HepG2 (cell line): ENCODE measurements at regions of chr1 and their contacts with region 1.

Region 1: DNA sequence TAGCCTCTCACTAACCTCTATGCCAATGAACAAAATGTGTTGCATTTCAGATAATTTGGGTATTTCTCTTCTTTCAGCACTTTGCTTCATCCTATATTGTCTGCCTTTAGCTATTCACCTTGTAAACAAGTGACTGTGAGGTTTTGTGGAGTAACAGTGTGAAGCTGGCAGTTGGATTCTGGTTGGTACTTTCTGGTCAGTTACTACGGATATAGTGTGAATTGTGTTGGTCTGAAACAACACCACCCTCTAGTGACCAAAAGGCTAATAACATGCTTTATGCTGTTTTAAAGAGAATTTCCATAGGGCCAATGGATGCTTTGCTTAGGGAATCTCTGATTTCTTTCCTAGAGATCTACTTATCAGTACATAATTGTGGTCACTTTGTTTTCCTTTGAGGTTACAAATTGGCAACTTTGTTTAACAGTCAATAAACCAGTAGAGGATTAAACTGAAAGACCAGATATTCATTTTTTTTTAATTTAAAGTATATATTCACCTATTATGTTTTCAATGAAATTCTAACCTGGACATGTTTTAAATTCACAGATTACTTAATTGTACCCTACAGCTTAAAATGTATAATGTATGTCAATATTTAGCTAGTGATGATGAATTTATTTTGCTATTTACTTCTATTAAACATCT is 2.5 kb upstream of the PTGER3 start:
- DNase-seq: peak; percentile 64
- ATAC-seq: peak; percentile 37
- H3K4me3 ChIP-seq: no peak overlapping the region
- H3K27ac ChIP-seq: no peak overlapping the region
- H3K4me1 ChIP-seq: peaks cover 6% of the 10 kb centered on the region; the same call in 1 of the 2 replicates
- H3K27me3 ChIP-seq: peaks cover 11 to 25% of the 10 kb centered on the region in 2 experiments
- CTCF ChIP-seq: peak; percentile 80
- EP300 ChIP-seq: no peak
- POLR2A ChIP-seq: no peak
- RAD21 ChIP-seq: peak; percentile 46; the same call in 1 of the 2 replicates

Region 2: DNA sequence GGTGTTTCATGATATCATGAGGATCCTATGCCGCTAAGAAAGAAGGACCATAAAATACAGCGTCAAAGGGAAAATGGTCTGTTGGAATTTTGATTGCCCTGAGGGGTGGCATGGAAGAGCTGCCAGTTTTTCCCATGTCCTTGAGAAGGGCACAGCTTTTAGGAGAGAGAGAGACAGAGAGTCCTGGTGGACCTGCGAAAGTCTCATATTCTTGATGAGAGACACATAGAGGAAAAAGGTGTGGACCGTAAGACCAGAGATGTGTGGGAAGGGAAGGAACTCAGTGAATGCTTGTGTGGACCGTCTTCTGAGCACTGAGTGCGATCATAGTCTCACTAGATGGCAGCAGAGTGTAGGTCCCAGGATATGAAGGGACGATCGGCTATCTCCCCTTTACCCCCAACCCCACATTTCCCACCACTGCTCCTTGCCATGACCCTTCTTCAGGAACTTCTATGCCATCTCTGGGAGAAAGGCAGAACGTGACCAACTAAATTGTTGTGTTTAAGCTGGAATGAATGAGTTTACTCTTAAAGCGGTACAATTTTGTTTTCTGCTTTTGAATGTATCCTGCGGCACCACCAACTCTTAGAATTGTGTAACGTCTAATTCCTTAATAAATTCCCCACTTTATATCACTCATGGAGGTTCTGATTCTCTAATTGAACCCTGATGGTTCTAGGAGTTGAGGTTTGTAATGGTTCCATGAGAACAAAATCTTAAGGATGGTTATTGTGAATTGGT is 521.3 kb before region 1 on chr1:
- CTCF ChIA-PET with region 1: interaction called, 7 read pairs
- POLR2A ChIA-PET with region 1: no interaction called
- in situ Hi-C with region 1: loop called (anchors 5 kb)
- intact Hi-C with region 1: loop called (anchors 1 kb)
- DNase-seq: peak; percentile 13
- ATAC-seq: peak; percentile 97
- H3K4me3 ChIP-seq: no peak overlapping the region
- H3K27ac ChIP-seq: no peak overlapping the region
- H3K4me1 ChIP-seq: no peaks in the 10 kb centered on the region
- H3K27me3 ChIP-seq: no peaks in the 10 kb centered on the region; a peak in 1 of 5 replicates
- CTCF ChIP-seq: peak; percentile 76
- EP300 ChIP-seq: no peak
- POLR2A ChIP-seq: no peak
- RAD21 ChIP-seq: no peak

Region 3: DNA sequence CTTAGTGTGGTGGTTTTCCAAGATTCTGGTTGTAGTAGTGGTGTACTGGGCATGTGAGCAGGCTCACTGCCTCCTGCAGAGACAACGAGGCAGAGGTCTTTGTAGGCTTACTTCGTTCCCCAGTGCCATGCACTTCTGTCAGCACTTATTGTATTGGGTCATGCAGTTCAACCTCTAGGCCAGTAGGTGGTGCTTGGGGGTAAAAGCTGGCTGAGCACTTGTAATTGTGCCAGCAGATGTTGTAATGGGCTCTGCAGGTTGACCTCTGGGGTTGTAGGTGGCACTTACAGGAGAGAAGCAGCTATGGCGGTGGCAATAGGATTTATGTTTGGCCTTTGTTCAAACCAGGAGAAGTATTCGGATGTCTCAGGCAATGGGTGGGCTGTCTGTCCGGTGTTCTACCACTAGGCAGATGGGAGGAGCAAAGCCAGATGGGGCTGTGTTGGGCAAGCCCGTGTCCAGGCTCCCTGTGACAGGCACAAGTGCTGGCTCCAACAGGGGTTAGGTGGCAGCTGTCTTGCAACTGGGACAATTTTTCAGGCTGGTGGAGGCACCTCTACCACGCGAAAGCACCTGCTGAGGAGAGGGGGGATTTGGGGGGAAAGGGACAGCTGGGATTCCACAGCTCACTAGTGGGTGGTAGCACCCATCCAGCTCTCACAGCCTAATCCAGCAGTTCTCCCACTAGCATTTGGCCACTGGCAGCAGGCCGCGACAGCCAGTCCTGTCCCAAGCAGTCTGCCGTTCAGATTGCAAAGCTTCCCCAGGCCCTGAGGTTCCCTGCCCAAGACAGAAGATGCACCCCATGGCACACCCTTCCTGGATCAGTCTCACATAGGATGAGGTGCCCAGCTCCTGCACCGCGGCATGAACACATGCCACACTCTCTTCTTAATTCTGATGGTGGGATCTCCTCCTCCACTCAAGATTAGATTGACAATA is 364.5 kb before region 1 on chr1:
- CTCF ChIA-PET with region 1: interaction called, 21 read pairs
- POLR2A ChIA-PET with region 1: no interaction called
- in situ Hi-C with region 1: loop called (anchors 5 kb)
- intact Hi-C with region 1: loop called (anchors 1 kb)
- DNase-seq: peak; percentile 68
- ATAC-seq: peak; percentile 99
- H3K4me3 ChIP-seq: no peak overlapping the region
- H3K27ac ChIP-seq: no peak overlapping the region
- H3K4me1 ChIP-seq: no peaks in the 10 kb centered on the region
- H3K27me3 ChIP-seq: no peaks in the 10 kb centered on the region
- CTCF ChIP-seq: peak; percentile 90
- EP300 ChIP-seq: no peak
- POLR2A ChIP-seq: no peak
- RAD21 ChIP-seq: peak; percentile 34; the same call in 1 of the 2 replicates

Region 4: DNA sequence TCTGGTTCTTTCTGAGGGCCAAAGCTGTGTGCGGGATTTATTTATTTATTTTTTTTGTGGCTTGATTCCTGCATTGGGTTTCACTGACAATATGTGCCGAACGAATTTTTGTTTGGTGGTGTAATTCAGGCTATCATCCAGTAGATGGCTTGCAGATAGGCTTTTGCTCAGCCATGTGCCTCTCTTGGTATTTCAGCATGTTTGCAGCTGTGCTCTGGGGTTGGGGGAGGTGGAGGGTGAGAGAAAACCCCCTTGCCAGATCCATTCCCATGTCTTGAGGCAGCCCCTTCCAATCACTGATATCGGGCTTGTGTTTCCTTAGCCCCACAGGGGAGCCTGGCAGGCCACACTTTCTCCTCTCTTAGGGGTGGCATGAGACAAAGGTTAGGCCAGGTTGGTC is 304.9 kb before region 1 on chr1:
- CTCF ChIA-PET with region 1: interaction called, 4 read pairs
- POLR2A ChIA-PET with region 1: no interaction called
- in situ Hi-C with region 1: no loop called
- intact Hi-C with region 1: loop called (anchors 1 kb)
- DNase-seq: peak; percentile 14
- ATAC-seq: peak; percentile 79
- H3K4me3 ChIP-seq: no peak overlapping the region
- H3K27ac ChIP-seq: no peak overlapping the region
- H3K4me1 ChIP-seq: no peaks in the 10 kb centered on the region
- H3K27me3 ChIP-seq: no peaks in the 10 kb centered on the region
- CTCF ChIP-seq: peak; percentile 35
- EP300 ChIP-seq: no peak
- POLR2A ChIP-seq: no peak
- RAD21 ChIP-seq: no peak